Mammary epithelial cell (primary cell): ENCODE measurements at regions of chr3 and their contacts with region 1.

Region 1: GRCh38 chr3:50088725-50089608 is at the start of gene RBM5:
- DNase-seq: peak; percentile 86
- H3K4me3 ChIP-seq: peak within 1 kb of the TSS; percentile 65 to 98 (median 96)
- H3K27ac ChIP-seq: peak within 1 kb of the TSS; percentile 90
- H3K4me1 ChIP-seq: peaks cover 18% of the 10 kb centered on the region
- H3K27me3 ChIP-seq: no peaks in the 10 kb centered on the region
- CTCF ChIP-seq: no peak
- total RNA-seq, gene RBM5: 105 to 116 TPM

Region 2: DNA sequence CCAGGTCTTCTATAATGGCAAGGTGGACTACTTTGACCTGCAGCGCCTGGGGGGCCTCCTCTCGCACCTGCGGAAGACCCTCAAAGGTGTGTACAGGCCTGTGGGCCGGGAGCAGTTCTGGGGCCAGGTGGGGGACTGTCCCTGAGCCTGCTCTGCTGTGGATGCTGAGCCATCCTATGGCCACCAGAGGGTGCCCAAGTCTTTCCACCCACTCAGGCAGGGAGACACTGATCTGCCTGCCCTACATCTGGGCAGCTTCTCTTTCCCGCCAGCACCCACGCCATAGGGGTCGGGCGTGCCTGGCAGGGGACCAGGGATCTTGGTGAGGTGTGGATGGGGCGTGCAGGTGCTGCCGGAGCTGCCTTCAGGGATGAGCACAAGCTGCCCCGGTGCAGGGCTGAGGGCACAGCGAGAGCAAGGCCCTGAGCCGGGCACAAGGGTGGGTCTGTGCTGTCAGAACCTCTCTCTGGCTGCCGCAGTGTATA is 385.5 kb before region 1 on chr3:
- CTCF ChIA-PET with region 1: no interaction called
- dilution Hi-C with region 1: no loop called
- in situ Hi-C with region 1: no loop called
- intact Hi-C with region 1: loop called (anchors 2 kb)
- DNase-seq: peak; percentile 49
- H3K4me3 ChIP-seq: no peak overlapping the region
- H3K27ac ChIP-seq: no peak overlapping the region
- H3K4me1 ChIP-seq: peaks cover 3% of the 10 kb centered on the region
- H3K27me3 ChIP-seq: no peaks in the 10 kb centered on the region
- CTCF ChIP-seq: peak; percentile 93 to 94

Region 3: DNA sequence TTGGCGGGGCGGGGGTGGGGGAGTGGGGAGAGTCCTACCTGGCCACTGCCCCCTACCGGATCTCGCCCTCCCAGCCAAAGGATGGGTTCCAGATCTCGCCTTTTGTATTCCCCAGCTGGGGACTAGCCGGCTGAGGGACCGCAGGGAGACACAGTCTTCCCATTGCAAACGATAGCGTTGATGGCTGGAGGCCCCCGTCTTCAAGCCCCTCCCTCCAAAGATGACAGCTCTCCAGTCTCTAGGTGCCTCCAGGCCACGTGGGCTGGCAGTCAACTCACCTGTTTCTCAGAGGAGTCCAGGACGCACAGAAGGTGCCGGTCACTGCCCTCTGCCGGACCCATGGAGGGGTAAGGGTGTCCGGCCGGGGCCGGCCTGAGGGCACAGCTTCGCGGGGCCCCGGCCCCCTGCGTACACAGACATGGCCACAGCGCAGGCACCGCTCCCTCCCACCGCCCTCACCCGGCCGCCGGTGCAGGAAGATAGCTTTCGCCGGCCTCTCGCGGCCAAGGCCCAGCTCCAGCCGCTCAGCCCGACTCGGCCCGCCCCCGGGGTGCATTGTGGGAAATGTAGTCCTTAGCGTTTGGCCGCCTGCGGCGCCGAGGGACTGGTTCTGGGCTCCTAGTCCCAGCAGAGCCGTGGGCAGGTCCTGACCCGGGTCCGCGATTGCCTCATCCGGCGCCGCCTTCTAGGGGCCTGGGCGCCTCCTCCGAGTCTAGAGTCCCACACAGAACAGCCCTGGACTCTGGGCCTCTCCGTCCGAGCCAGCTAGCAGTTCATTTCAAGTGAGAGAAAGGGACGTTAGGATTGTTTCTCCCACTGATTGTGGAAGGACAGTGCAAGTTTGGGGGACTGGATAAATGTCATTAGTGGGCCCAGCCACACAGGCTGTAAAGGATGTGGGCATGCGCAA is 159.4 kb before region 1 on chr3 and contains the start of gene MON1A:
- CTCF ChIA-PET with region 1: no interaction called
- dilution Hi-C with region 1: no loop called
- in situ Hi-C with region 1: no loop called
- intact Hi-C with region 1: loop called (anchors 1 kb)
- DNase-seq: peak; percentile 89
- H3K4me3 ChIP-seq: peak within 1 kb of the TSS; percentile 65 to 72 (median 66)
- H3K27ac ChIP-seq: no peak within 1 kb of the TSS
- H3K4me1 ChIP-seq: peaks cover 25% of the 10 kb centered on the region
- H3K27me3 ChIP-seq: no peaks in the 10 kb centered on the region
- CTCF ChIP-seq: peak in 1 of 2 donors; percentile 47
- total RNA-seq, gene MON1A: 11.5 to 15.9 TPM

Region 4: GRCh38 chr3:50078622-50079021 is 10.3 kb before region 1 on chr3:
- CTCF ChIA-PET with region 1: interaction called, 13 read pairs
- dilution Hi-C with region 1: no loop called
- in situ Hi-C with region 1: no loop called
- intact Hi-C with region 1: no loop called
- DNase-seq: peak; percentile 25
- H3K4me3 ChIP-seq: no peak overlapping the region
- H3K27ac ChIP-seq: no peak overlapping the region
- H3K4me1 ChIP-seq: no peaks in the 10 kb centered on the region
- H3K27me3 ChIP-seq: no peaks in the 10 kb centered on the region
- CTCF ChIP-seq: no peak

Region 5: GRCh38 chr3:50100956-50101845 is 12.2 kb after region 1 on chr3:
- CTCF ChIA-PET with region 1: no interaction called
- dilution Hi-C with region 1: no loop called
- in situ Hi-C with region 1: no loop called
- intact Hi-C with region 1: no loop called
- DNase-seq: no peak
- H3K4me3 ChIP-seq: no peak overlapping the region
- H3K27ac ChIP-seq: no peak overlapping the region
- H3K4me1 ChIP-seq: no peaks in the 10 kb centered on the region
- H3K27me3 ChIP-seq: no peaks in the 10 kb centered on the region
- CTCF ChIP-seq: no peak

Region 6: GRCh38 chr3:50154840-50155474 is 66.0 kb after region 1 on chr3 and contains the start of gene SEMA3F:
- CTCF ChIA-PET with region 1: no interaction called
- dilution Hi-C with region 1: no loop called
- in situ Hi-C with region 1: no loop called
- intact Hi-C with region 1: loop called (anchors 2 kb)
- DNase-seq: peak; percentile 81
- H3K4me3 ChIP-seq: peak within 1 kb of the TSS; percentile 69 to 84 (median 71)
- H3K27ac ChIP-seq: peak within 1 kb of the TSS; percentile 67
- H3K4me1 ChIP-seq: peaks cover 70% of the 10 kb centered on the region
- H3K27me3 ChIP-seq: no peaks in the 10 kb centered on the region
- CTCF ChIP-seq: no peak
- total RNA-seq, gene SEMA3F: 102 to 129 TPM